Cardiac septum (tissue), 1 donor: ENCODE measurements at regions of chr10 and their contacts with region 1.

Region 1: GRCh38 chr10:6014241-6014761 is 37.0 kb upstream of the IL15RA start:
- DNase-seq: no peak

Region 2: GRCh38 chr10:5876181-5876768 is 138.0 kb before region 1 on chr10:
- intact Hi-C with region 1: no loop called
- DNase-seq: no peak

Region 3: DNA sequence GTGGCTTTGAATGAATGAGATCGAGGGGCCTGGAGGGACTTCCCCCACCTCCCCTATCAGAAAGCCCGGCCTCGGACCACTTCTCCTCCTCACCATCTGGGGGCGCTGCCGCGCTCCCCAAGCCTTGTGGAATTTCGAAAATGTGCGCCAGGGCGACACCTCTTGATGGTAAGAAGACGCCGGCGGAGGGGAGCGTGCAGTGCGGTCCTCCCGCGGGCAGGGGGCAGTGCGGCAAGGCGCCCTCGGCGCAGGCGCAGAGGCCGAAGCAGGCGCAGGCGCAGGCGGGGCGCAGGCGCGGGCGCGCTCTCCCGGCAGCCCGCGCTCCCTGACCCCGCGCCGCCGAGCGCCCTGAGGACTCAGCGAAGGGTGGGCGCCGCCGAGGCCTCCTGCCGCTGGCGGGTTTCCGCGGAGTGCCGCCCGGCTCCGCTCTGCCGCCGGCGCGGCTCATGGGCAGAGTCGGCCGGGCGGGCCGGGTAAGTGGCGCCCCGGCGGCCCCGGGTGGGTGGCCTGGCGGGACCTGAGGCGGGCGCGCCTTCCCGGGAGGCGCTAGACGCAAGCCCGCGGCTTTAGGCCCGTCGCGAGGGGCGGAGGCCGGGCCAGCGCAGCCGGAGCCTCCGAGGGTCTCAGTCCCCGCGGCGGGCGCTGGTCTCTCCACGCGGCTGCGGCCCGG is 74.6 kb after region 1 on chr10 and contains the start of gene RBM17:
- intact Hi-C with region 1: loop called (anchors 5 kb)
- DNase-seq: peak; percentile 98
- total RNA-seq, gene RBM17: 70.1 TPM